ENCODE measurements at regions of chr1 and their contacts with region 1.

Region 1: DNA sequence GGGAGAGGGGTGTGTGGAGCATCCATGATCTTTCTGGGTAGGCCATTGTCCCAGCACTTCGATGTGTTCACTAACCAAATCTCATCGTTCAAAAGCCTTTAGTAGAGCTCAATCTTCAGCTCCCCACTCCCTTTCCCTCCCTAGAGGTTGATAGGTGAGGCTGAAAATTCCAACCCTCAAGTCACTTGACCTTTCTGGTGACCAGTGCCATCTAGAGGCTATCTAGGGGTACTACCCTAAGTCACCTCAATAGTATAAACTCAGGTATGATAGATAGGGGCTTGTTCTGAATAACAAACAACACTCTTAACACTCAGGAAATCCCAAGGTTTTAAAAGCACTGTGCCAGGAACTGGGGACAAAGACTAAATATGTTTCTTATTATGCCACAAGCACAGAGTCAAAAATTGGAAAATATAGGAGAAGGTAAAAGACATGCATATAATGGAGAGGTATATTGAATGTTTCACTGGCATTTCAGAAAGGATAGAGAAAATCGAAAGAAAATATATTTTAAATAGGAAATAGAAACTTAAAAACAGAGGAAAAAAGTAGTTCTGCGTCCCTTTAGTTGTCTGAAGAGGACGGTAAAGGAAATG is 42.9 kb upstream of the CD53 start:
- DNase-seq: peak in 6 of 14 experiments; percentile 11 to 76 (median 52)
- ATAC-seq: peak; percentile 96
- H3K4me3 ChIP-seq: no peak overlapping the region
- H3K4me3 Mint-ChIP-seq: no peak overlapping the region
- H3K27ac ChIP-seq: no peak overlapping the region
- H3K27ac Mint-ChIP-seq: no peak overlapping the region
- H3K4me1 ChIP-seq: peaks cover 5% of the 10 kb centered on the region
- H3K4me1 Mint-ChIP-seq: peaks cover 21% of the 10 kb centered on the region
- H3K27me3 ChIP-seq: no peaks in the 10 kb centered on the region
- H3K27me3 Mint-ChIP-seq: no peaks in the 10 kb centered on the region
- CTCF ChIP-seq: peak; percentile 95

Region 2: DNA sequence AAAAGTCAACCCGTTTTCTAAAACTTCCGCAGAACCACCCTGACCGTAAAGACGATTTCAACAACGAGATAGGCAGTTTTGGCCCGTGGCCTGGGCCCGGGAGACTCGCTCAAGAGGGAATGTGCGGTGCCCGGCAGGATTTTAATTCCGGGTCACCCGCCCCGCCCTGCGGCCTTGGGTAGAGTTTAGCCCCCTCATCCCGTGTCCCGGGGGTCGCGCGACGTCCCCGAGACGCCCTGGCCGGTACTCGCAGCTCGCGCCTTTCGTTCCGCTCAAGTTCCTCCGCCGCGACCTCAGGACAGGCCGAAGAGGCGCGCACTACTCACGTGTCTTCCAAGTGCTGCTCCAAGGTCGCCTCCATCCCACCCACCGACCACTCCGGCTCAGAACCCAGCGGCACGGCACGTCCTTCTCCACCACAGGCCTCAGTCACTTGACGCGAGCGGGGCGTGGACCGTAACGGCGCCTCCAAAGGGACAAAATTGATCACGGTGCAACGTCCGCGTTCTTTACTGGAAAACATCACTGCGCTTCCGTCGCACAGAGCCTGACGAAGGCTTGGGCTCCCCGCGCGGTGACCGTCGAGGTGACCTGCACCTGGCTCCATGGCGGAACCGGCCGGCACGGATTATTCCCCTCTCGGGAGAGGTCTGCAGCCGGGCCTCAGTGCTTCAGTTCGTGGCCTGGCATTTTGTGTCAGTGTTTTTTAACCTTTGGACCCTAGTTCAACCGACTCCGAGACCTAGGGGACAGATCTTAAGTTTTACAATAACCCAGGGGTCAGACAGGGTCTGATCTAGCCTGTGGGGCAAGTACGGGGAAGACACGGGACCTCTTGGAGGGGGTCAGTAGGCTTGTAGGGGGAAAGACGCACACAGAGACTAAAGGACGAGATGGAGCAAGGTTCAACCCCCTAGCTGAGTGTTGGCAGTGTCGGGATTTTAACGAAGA is 422.5 kb before region 1 on chr1 and contains the start of gene LAMTOR5:
- CTCF ChIA-PET with region 1: no interaction called
- POLR2A ChIA-PET with region 1: no interaction called
- intact Hi-C with region 1: no loop called
- DNase-seq: peak; percentile 79 to 95 (median 86)
- ATAC-seq: peak; percentile 94
- H3K4me3 ChIP-seq: peak within 1 kb of the TSS; percentile 90
- H3K4me3 Mint-ChIP-seq: peak within 1 kb of the TSS; percentile 99
- H3K27ac ChIP-seq: peak within 1 kb of the TSS; percentile 84 to 88
- H3K27ac Mint-ChIP-seq: peak within 1 kb of the TSS; percentile 99
- H3K4me1 ChIP-seq: peaks cover 26% of the 10 kb centered on the region
- H3K4me1 Mint-ChIP-seq: peaks cover 38% of the 10 kb centered on the region
- H3K27me3 ChIP-seq: no peaks in the 10 kb centered on the region
- H3K27me3 Mint-ChIP-seq: no peaks in the 10 kb centered on the region
- CTCF ChIP-seq: no peak
- total RNA-seq, gene LAMTOR5: 105 to 108 TPM

Region 3: DNA sequence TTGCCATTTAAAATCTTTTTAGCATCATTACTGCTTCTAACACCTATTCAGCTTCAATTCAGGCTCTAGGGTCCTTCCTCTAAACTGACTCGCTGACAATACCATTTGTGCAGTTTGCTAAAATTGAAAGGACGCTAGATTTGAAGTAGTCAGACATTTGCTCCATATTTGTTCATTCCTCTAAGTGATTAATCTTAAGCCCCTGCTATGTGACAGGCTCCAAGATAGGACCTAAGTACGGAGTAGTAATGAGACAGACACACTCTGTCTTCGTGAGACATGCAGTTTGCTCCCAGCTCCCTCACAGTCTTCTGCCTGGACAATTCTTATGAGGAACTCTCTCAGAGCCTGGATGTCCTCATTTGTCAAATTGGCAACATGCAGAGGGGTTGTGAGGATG is 16.8 kb after region 1 on chr1:
- CTCF ChIA-PET with region 1: no interaction called
- POLR2A ChIA-PET with region 1: interaction called, 4 read pairs
- intact Hi-C with region 1: loop called (anchors 1 to 2 kb)
- DNase-seq: no peak
- ATAC-seq: no peak
- H3K4me3 ChIP-seq: no peak overlapping the region
- H3K4me3 Mint-ChIP-seq: no peak overlapping the region
- H3K27ac ChIP-seq: no peak overlapping the region
- H3K27ac Mint-ChIP-seq: no peak overlapping the region
- H3K4me1 ChIP-seq: no peaks in the 10 kb centered on the region
- H3K4me1 Mint-ChIP-seq: no peaks in the 10 kb centered on the region
- H3K27me3 ChIP-seq: no peaks in the 10 kb centered on the region
- H3K27me3 Mint-ChIP-seq: no peaks in the 10 kb centered on the region
- CTCF ChIP-seq: no peak